CD8-positive, alpha-beta T cell (primary cell): ENCODE measurements at regions of chr13 and their contacts with region 1.

Region 1: GRCh38 chr13:30802953-30803478 is 67.7 kb downstream of the ALOX5AP start:
- DNase-seq: peak; percentile 61 to 89 (median 80)
- ATAC-seq: peak; percentile 99
- H3K4me3 ChIP-seq: no peak overlapping the region
- H3K4me3 Mint-ChIP-seq: peak overlapping the region; percentile 49
- H3K27ac ChIP-seq: no peak overlapping the region
- H3K27ac Mint-ChIP-seq: no peak overlapping the region
- H3K4me1 ChIP-seq: no peaks in the 10 kb centered on the region
- H3K4me1 Mint-ChIP-seq: peaks cover 11% of the 10 kb centered on the region
- H3K27me3 ChIP-seq: no peaks in the 10 kb centered on the region
- H3K27me3 Mint-ChIP-seq: no peaks in the 10 kb centered on the region
- CTCF ChIP-seq: peak; percentile 95

Region 2: DNA sequence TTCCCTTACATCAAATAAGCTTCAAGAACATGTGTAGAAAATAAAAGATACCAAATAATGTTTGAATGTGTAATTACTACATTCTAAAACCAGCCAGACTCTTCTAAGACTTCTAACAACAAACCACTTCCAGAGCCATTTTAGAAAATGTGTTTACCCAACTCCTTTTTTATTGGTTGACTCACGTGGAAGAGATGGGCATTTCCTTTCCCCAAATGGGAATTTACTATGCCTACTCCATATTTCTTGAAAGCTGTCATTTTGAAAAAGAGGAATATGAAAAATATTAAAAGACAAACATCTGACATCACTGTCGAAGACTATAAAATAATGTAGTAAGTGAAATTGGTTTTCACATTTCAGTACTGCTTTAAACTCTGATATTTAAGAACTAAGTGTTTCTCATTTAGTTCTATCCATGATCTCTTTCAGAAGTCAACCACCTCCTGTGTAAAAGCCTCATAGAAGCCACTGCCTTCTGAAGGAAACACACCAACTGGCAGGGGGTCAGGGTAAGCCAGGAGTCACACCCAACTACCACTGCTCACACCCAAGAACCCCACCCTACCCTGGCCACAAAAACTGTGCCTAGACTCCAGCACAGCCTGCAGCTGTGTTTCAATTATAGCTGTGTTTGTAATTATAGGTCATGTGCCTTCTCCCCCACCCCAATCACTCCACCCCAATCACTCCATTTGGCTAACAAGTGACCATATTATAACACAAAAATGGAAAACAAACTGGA is 1039.4 kb before region 1 on chr13:
- CTCF ChIA-PET with region 1: no interaction called
- POLR2A ChIA-PET with region 1: no interaction called
- intact Hi-C with region 1: loop called in 1 of 2 experiments (anchors 10 kb)
- DNase-seq: peak in 2 of 9 experiments; percentile 9 to 12
- ATAC-seq: no peak
- H3K4me3 ChIP-seq: no peak overlapping the region
- H3K4me3 Mint-ChIP-seq: no peak overlapping the region
- H3K27ac ChIP-seq: no peak overlapping the region
- H3K27ac Mint-ChIP-seq: peak overlapping the region; percentile 38
- H3K4me1 ChIP-seq: peaks cover 13% of the 10 kb centered on the region
- H3K4me1 Mint-ChIP-seq: peaks cover 30% of the 10 kb centered on the region
- H3K27me3 ChIP-seq: no peaks in the 10 kb centered on the region
- H3K27me3 Mint-ChIP-seq: no peaks in the 10 kb centered on the region
- CTCF ChIP-seq: no peak

Region 3: GRCh38 chr13:30355384-30355699 is 447.7 kb before region 1 on chr13:
- CTCF ChIA-PET with region 1: interaction called, 3 read pairs
- POLR2A ChIA-PET with region 1: no interaction called
- intact Hi-C with region 1: loop called (anchors 5 kb)
- DNase-seq: peak; percentile 12 to 76 (median 60)
- ATAC-seq: peak; percentile 96
- H3K4me3 ChIP-seq: no peak overlapping the region
- H3K4me3 Mint-ChIP-seq: peak overlapping the region; percentile 47
- H3K27ac ChIP-seq: no peak overlapping the region
- H3K27ac Mint-ChIP-seq: peak overlapping the region; percentile 37
- H3K4me1 ChIP-seq: peaks cover 18% of the 10 kb centered on the region
- H3K4me1 Mint-ChIP-seq: peaks cover 25% of the 10 kb centered on the region
- H3K27me3 ChIP-seq: no peaks in the 10 kb centered on the region
- H3K27me3 Mint-ChIP-seq: no peaks in the 10 kb centered on the region
- CTCF ChIP-seq: peak; percentile 64

Region 4: GRCh38 chr13:30572859-30573275 is 230.1 kb before region 1 on chr13:
- CTCF ChIA-PET with region 1: no interaction called
- POLR2A ChIA-PET with region 1: no interaction called
- intact Hi-C with region 1: loop called in 1 of 2 experiments (anchors 10 kb)
- DNase-seq: peak in 4 of 9 experiments; percentile 12 to 72 (median 40)
- ATAC-seq: peak; percentile 57
- H3K4me3 ChIP-seq: peak overlapping the region; percentile 23 to 51
- H3K4me3 Mint-ChIP-seq: peak overlapping the region; percentile 75
- H3K27ac ChIP-seq: peak overlapping the region; percentile 58 to 72
- H3K27ac Mint-ChIP-seq: peak overlapping the region; percentile 91
- H3K4me1 ChIP-seq: peaks cover 27% of the 10 kb centered on the region
- H3K4me1 Mint-ChIP-seq: peaks cover 32% of the 10 kb centered on the region
- H3K27me3 ChIP-seq: no peaks in the 10 kb centered on the region
- H3K27me3 Mint-ChIP-seq: no peaks in the 10 kb centered on the region
- CTCF ChIP-seq: peak; percentile 44

Region 5: GRCh38 chr13:30679483-30680330 is 123.3 kb before region 1 on chr13:
- CTCF ChIA-PET with region 1: interaction called, 11 read pairs
- POLR2A ChIA-PET with region 1: no interaction called
- intact Hi-C with region 1: loop called (anchors 1 kb)
- DNase-seq: peak in 8 of 9 experiments; percentile 20 to 69 (median 34)
- ATAC-seq: peak; percentile 93
- H3K4me3 ChIP-seq: no peak overlapping the region
- H3K4me3 Mint-ChIP-seq: no peak overlapping the region
- H3K27ac ChIP-seq: no peak overlapping the region
- H3K27ac Mint-ChIP-seq: no peak overlapping the region
- H3K4me1 ChIP-seq: no peaks in the 10 kb centered on the region
- H3K4me1 Mint-ChIP-seq: peaks cover 8% of the 10 kb centered on the region
- H3K27me3 ChIP-seq: no peaks in the 10 kb centered on the region
- H3K27me3 Mint-ChIP-seq: no peaks in the 10 kb centered on the region
- CTCF ChIP-seq: peak; percentile 47

Region 6: DNA sequence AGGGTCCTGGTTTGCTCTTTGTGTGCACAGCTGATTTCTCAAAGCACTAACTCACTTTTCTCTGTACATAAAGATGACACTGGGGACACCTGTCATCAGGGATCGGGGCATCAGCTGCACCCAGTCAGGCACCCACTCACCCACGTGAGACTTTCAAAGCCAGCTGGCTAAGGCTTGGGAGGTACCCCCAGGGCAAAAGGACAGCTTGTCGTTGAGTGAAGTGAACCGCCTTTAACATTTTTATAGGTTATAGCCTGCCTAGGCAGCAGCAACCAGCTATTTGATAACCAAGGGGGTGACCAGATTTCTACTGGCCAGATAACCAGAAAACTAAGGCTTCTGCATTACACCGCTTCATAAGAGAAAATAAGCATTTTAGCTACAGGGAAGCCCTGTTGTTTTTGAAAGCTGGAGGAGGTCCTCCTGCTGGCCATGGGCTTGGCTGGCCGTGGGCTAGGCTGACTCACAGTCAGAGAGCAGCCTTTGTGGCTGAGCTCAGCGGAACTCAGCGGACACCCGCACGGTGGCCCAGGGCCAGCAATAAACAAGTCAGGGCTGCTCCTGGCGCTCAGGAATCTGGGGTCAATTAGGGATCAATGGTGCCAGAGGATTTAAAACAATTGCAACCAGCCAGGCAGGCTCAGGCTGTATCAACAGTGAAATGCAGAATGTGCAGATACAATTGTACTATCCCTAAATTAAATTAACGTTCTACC is 10.6 kb before region 1 on chr13:
- CTCF ChIA-PET with region 1: interaction called, 13 read pairs
- POLR2A ChIA-PET with region 1: interaction called, 5 read pairs
- intact Hi-C with region 1: no loop called
- DNase-seq: peak in 1 of 9 experiments; percentile 36
- ATAC-seq: no peak
- H3K4me3 ChIP-seq: no peak overlapping the region
- H3K4me3 Mint-ChIP-seq: no peak overlapping the region
- H3K27ac ChIP-seq: no peak overlapping the region
- H3K27ac Mint-ChIP-seq: no peak overlapping the region
- H3K4me1 ChIP-seq: peaks cover 4% of the 10 kb centered on the region
- H3K4me1 Mint-ChIP-seq: peaks cover 12% of the 10 kb centered on the region
- H3K27me3 ChIP-seq: no peaks in the 10 kb centered on the region
- H3K27me3 Mint-ChIP-seq: no peaks in the 10 kb centered on the region
- CTCF ChIP-seq: no peak

Region 7: GRCh38 chr13:30826911-30827577 is 24.0 kb after region 1 on chr13:
- CTCF ChIA-PET with region 1: no interaction called
- POLR2A ChIA-PET with region 1: no interaction called
- intact Hi-C with region 1: no loop called
- DNase-seq: no peak
- ATAC-seq: no peak
- H3K4me3 ChIP-seq: no peak overlapping the region
- H3K4me3 Mint-ChIP-seq: no peak overlapping the region
- H3K27ac ChIP-seq: no peak overlapping the region
- H3K27ac Mint-ChIP-seq: no peak overlapping the region
- H3K4me1 ChIP-seq: no peaks in the 10 kb centered on the region
- H3K4me1 Mint-ChIP-seq: no peaks in the 10 kb centered on the region
- H3K27me3 ChIP-seq: no peaks in the 10 kb centered on the region
- H3K27me3 Mint-ChIP-seq: peaks cover 5% of the 10 kb centered on the region
- CTCF ChIP-seq: no peak